Transverse colon (tissue), 4 donors: ENCODE measurements at regions of chr5 and their contacts with region 1.

Region 1: GRCh38 chr5:137186759-137187461 is 312.2 kb downstream of the SPOCK1 start:
- DNase-seq: no peak
- H3K4me3 ChIP-seq: no peak overlapping the region
- H3K27ac ChIP-seq: no peak overlapping the region
- H3K4me1 ChIP-seq: no peaks in the 10 kb centered on the region
- H3K27me3 ChIP-seq: no peaks in the 10 kb centered on the region
- CTCF ChIP-seq: no peak
- EP300 ChIP-seq: no peak
- POLR2A ChIP-seq: no peak

Region 2: GRCh38 chr5:136699651-136700050 is 487.3 kb before region 1 on chr5:
- in situ Hi-C with region 1: no loop called
- intact Hi-C with region 1: no loop called
- DNase-seq: no peak
- H3K4me3 ChIP-seq: no peak overlapping the region
- H3K27ac ChIP-seq: no peak overlapping the region
- H3K4me1 ChIP-seq: no peaks in the 10 kb centered on the region
- H3K27me3 ChIP-seq: no peaks in the 10 kb centered on the region
- CTCF ChIP-seq: no peak
- EP300 ChIP-seq: no peak
- POLR2A ChIP-seq: no peak

Region 3: GRCh38 chr5:137146402-137146890 is 40.5 kb before region 1 on chr5:
- in situ Hi-C with region 1: no loop called
- intact Hi-C with region 1: loop called (anchors 1 kb)
- DNase-seq: no peak
- H3K4me3 ChIP-seq: no peak overlapping the region
- H3K27ac ChIP-seq: no peak overlapping the region
- H3K4me1 ChIP-seq: peaks cover 0 to 11% (median 0%) of the 10 kb centered on the region in 4 donors
- H3K27me3 ChIP-seq: no peaks in the 10 kb centered on the region
- CTCF ChIP-seq: no peak
- EP300 ChIP-seq: no peak
- POLR2A ChIP-seq: no peak

Region 4: DNA sequence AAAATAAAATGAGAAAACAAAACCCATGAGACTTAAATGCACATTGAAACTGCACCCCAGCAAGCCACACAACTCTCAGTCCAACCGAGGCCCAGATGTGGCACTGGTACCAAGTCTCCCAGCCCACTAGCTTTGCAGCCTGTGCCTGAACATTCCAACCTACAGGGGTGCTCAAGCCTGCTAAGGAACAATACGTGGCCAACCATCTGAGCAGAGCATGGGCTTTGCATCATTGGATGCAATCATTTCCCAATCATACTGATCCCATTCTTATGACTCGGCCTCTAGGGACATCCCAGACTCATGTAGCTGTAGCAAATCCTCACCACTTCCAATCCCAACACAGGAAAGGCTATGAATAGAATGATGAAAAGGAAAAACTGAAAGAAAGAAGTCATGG is 15.0 kb after region 1 on chr5:
- in situ Hi-C with region 1: no loop called
- intact Hi-C with region 1: no loop called
- DNase-seq: no peak
- H3K4me3 ChIP-seq: no peak overlapping the region
- H3K27ac ChIP-seq: no peak overlapping the region
- H3K4me1 ChIP-seq: no peaks in the 10 kb centered on the region
- H3K27me3 ChIP-seq: no peaks in the 10 kb centered on the region
- CTCF ChIP-seq: no peak
- EP300 ChIP-seq: no peak
- POLR2A ChIP-seq: no peak

Region 5: GRCh38 chr5:138095100-138095907 is 908.4 kb after region 1 on chr5:
- in situ Hi-C with region 1: no loop called
- intact Hi-C with region 1: no loop called
- DNase-seq: no peak
- H3K4me3 ChIP-seq: no peak overlapping the region
- H3K27ac ChIP-seq: no peak overlapping the region
- H3K4me1 ChIP-seq: no peaks in the 10 kb centered on the region
- H3K27me3 ChIP-seq: peaks cover 6% of the 10 kb centered on the region
- CTCF ChIP-seq: no peak
- EP300 ChIP-seq: no peak
- POLR2A ChIP-seq: no peak